ENCODE measurements at regions of chr9 and their contacts with region 1.

Region 1: GRCh38 chr9:113591001-113591898 is 127.7 kb downstream of the RGS3 start:
- ATAC-seq: peak; percentile 11 to 47 (median 26)
- H3K4me3 ChIP-seq: no peak overlapping the region
- H3K27ac ChIP-seq: no peak overlapping the region
- H3K4me1 ChIP-seq: peaks cover 31 to 35% of the 10 kb centered on the region in 2 donors

Region 2: DNA sequence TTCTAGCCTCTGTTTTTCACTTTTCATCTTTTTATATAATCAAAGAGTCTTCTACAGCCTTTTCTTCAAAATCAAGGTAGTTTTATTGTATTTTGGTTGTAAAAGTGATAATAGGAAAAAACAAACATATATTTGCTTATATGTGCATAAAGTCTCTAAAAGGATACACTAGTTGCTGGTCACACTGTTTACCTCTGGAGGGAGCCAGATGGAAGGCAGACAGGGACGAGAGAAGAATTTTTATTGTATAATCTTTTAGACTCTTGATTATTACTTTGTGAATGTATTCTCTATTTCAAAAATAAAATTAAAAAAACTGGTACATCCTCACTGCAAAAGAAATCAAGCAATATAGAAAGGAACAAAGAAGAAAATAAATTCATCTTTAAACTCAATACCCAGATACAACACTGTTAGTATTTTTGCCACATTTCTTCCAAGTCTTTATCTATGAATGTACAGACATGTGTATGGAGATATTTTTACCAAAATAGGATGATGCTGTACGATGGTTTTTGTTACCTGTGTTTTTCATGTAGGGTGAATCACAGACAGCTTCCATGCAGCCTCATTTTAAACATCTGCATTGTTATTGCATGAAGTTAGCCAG is 281.9 kb before region 1 on chr9:
- in situ Hi-C with region 1: loop called in 1 of 9 experiments (anchors 25 kb)
- ATAC-seq: peak in 4 of 8 experiments; percentile 32 to 67 (median 54)
- H3K4me3 ChIP-seq: no peak overlapping the region
- H3K27ac ChIP-seq: no peak overlapping the region
- H3K4me1 ChIP-seq: no peaks in the 10 kb centered on the region

Region 3: GRCh38 chr9:113401027-113401792 is 190.0 kb before region 1 on chr9 and contains the start of gene ALAD:
- in situ Hi-C with region 1: no loop called
- ATAC-seq: peak; percentile 92 to 97 (median 96)
- H3K4me3 ChIP-seq: peak within 1 kb of the TSS; percentile 54 to 90 (median 68)
- H3K27ac ChIP-seq: peak within 1 kb of the TSS; percentile 14 to 23
- H3K4me1 ChIP-seq: peaks cover 0 to 13% of the 10 kb centered on the region in 2 donors
- total RNA-seq, gene ALAD: 10.2 to 21.9 (median 17.0) TPM

Region 4: GRCh38 chr9:113446323-113446740 is 144.9 kb before region 1 on chr9:
- in situ Hi-C with region 1: loop called in 4 of 9 experiments (anchors 10 to 25 kb)
- ATAC-seq: peak; percentile 29 to 59 (median 54)
- H3K4me3 ChIP-seq: no peak overlapping the region
- H3K27ac ChIP-seq: no peak overlapping the region
- H3K4me1 ChIP-seq: peaks cover 6 to 11% of the 10 kb centered on the region in 2 donors

Region 5: DNA sequence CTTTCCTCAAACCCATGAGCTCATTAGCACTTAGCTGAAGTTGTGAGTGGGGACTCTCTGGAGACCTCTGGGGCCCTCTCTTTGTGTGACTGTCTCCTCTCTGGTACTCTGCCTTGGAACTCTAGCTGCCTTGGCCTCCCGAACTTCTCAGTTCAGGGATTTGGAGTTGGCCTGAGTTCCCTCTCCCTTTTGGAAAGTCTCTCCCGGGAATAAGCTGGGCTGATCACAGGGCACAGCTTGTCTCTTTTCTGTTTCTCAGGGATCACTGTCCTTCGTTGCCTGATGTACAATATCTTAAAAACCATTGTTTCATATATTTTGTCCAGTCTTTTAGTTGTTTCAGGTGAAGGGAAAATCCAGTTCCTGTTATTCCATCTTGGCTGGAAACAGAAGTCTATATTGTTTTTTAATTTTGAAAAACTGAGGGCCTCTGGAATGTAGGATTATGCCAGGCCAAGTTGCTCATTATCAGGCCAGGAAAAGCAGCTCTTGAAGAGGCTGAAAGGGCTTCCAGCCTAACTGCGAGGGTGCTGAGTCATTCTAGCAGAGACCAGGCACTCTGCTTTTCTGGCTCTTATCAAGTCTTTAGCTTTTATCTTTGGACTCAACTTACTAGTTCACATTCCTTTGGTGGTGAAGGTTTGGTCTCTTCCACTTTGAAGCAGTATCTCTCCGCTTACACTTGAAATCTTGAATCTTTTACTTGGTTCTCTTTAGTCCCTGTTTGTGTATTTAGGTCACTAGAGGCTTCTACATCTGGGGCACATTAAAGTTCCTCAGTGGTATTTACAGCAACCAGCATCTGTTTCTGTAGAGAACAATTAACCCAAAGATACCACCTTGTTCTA is 136.1 kb before region 1 on chr9:
- in situ Hi-C with region 1: loop called in 3 of 9 experiments (anchors 10 to 25 kb)
- ATAC-seq: peak in 7 of 8 experiments; percentile 47 to 95 (median 63)
- H3K4me3 ChIP-seq: no peak overlapping the region
- H3K27ac ChIP-seq: no peak overlapping the region
- H3K4me1 ChIP-seq: peaks cover 4 to 7% of the 10 kb centered on the region in 2 donors

Region 6: GRCh38 chr9:113508111-113508749 is 83.0 kb before region 1 on chr9:
- in situ Hi-C with region 1: no loop called
- ATAC-seq: peak in 3 of 8 experiments; percentile 82 to 83 (median 83)
- H3K4me3 ChIP-seq: no peak overlapping the region
- H3K27ac ChIP-seq: no peak overlapping the region
- H3K4me1 ChIP-seq: peaks cover 14 to 24% of the 10 kb centered on the region in 2 donors